ENCODE measurements at regions of chr12 and their contacts with region 1.

Region 1: DNA sequence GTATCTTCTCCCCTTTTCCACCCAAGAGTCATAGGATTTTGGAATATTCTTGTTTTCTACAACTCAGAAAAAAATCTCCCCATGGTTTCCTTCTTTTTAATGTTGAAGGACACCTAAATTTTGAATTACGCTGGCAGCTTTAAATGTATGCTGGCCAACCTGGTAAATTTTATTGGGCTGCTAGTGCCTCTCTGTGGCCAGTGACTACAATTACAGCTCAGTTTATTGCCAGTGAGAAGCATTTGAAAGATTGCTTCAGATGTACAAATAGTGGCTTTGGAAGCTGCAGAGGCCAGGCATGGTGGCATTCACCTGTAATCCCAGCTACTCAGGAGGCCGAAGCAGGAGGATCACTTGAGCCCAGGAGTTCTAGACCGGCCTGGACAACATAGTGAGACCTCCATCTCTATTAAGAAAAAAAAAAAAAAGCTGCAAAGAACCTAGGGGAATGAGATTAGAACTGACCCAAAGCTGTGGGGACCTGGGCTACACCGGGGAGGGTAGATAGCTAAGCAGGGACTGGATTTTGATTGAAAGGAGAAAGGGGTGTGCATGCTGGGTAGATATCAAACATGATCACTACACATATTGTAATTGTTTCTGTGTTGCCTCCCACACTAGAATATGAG is 7.6 kb upstream of the RAB21 start:
- DNase-seq: no peak
- ATAC-seq: peak; percentile 76

Region 2: GRCh38 chr12:71415336-71416231 is 331.5 kb before region 1 on chr12:
- intact Hi-C with region 1: loop called (anchors 1 kb)
- DNase-seq: no peak
- ATAC-seq: no peak

Region 3: GRCh38 chr12:71636704-71637115 is 110.4 kb before region 1 on chr12:
- intact Hi-C with region 1: loop called (anchors 5 kb)
- DNase-seq: no peak
- ATAC-seq: no peak

Region 4: GRCh38 chr12:71652656-71653055 is 94.4 kb before region 1 on chr12:
- intact Hi-C with region 1: no loop called
- DNase-seq: no peak
- ATAC-seq: no peak

Region 5: DNA sequence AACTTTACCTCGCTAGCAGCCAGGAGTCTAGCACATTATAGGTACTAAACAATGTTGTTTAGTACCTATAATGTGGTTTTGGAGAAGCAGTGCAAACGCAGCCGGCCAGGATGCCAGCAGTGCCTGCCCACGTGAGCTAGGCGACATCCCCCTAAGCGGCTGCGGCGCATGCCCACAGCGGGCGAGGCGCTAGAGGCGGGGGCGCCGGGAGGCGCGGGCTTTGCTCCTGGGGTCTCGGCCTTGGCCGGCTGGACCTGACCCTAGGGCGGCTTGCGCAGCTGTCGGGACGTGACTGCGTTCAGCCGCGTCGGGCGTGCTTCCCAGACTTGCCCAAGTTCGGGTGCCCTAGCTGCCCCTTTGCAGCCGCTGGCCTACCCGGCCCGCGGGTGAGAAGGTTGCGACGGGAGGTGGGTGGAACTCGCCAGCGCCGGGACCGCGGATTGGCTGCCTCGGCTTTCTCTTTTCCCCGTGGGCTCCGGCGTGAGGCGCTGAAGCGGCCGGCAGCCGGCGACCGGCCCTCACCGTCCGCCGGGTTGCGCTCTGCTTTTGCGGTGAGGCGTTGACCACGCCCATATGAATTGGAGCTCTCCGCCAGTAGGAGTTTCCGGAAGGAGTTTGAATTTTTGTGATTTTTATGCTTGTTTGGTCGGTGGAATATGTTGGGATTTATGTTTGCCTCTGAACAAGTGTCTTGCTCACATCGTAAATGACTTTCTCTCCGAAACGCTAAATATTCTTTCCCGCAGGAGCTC is 61.0 kb before region 1 on chr12 and contains the start of gene TMEM19:
- intact Hi-C with region 1: loop called (anchors 5 kb)
- DNase-seq: peak; percentile 96
- ATAC-seq: peak; percentile 99
- total RNA-seq, gene TMEM19: 25.7 TPM

Measured in Right ventricle myocardium inferior (tissue), 1 donor.